ENCODE measurements at regions of chr11 and their contacts with region 1.

Region 1: DNA sequence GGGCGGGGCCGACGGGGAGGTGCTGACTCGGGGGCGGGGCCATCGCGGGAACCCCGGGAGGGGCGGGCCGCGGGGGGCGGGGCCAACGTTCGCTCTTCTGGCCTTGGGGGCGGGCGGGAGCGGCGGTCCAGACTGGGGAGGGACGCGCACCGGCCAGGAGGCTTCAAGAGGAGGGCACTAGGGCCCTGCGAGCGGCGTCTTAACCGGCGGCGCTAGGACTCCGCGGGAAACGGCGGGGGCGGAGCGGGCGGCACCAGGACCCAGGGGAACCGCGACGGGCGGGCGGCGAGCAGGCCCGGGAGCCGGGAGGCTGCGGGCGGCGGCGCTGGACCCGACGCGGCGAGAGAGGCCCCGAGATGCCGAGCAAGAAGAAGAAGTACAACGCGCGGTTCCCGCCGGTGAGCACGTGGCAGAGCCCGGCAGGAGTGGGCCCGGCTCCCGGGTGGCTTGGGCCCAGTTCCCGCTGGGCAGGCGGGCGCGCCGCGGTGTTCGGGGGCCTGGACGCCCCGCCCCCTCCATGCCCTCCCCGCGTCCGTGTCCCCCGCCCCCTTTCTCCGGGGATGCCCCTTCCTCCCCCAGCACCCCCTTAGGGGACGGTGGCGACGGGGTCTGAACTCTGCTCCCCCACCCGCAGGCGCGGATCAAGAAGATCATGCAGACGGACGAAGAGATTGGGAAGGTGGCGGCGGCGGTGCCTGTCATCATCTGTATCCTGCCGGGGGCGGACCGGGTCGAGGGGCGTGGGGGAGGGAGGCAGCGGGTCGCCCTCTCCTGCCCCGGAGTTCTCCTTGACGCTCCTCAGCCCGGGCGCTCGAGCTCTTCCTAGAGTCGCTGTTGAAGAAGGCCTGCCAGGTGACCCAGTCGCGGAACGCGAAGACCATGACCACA is at the start of gene DRAP1:
- DNase-seq: peak; percentile 99
- H3K4me3 Mint-ChIP-seq: peak within 1 kb of the TSS; percentile 93
- H3K27ac Mint-ChIP-seq: peak within 1 kb of the TSS; percentile 84
- H3K4me1 Mint-ChIP-seq: peaks cover 41% of the 10 kb centered on the region
- H3K27me3 Mint-ChIP-seq: no peaks in the 10 kb centered on the region
- total RNA-seq, gene DRAP1: 117 to 134 TPM

Region 2: DNA sequence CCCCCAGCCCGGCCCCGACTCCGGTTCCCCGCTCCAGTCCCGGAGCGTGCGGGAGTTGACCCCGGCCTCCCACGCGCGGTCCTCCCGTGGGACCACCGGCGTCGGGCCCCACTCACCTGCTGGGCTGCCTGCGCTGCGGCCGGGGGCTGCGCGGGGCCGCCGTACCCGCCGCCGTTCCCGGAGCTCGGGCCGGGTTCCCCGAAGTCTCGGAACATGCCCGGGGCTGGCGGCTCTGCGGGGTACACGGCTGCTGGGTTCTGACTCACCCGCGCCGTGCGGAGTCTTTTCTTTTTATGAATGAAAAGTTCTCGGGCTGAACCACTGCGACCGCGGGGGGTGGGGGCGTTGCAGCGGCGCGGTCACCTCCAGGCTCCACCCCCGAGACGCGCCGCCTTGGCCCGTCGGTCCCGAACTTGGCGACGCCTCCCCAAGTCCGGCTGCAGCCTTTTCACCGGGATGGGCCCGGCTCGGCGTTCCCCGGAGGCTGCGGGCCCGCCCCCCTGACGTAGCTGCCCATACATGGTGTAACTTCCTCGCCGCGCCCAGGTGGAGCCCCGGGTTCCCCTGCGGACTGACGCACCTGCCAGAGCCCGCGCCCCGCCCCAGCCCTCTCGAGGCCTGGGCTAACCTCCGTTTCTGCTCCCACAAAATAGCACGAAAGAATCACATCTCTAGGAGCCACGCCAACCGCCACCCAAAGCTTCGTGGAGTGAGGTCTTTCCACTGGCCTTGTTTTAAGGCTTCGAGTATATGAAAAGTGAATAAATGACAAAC is 19.1 kb before region 1 on chr11 and contains the start of gene FOSL1:
- CTCF ChIA-PET with region 1: no interaction called
- intact Hi-C with region 1: loop called (anchors 1 kb)
- DNase-seq: peak; percentile 96
- H3K4me3 Mint-ChIP-seq: peak within 1 kb of the TSS; percentile 83
- H3K27ac Mint-ChIP-seq: peak within 1 kb of the TSS; percentile 79
- H3K4me1 Mint-ChIP-seq: peaks cover 33% of the 10 kb centered on the region
- H3K27me3 Mint-ChIP-seq: peaks cover 2% of the 10 kb centered on the region
- total RNA-seq, gene FOSL1: 8.2 TPM

Region 3: DNA sequence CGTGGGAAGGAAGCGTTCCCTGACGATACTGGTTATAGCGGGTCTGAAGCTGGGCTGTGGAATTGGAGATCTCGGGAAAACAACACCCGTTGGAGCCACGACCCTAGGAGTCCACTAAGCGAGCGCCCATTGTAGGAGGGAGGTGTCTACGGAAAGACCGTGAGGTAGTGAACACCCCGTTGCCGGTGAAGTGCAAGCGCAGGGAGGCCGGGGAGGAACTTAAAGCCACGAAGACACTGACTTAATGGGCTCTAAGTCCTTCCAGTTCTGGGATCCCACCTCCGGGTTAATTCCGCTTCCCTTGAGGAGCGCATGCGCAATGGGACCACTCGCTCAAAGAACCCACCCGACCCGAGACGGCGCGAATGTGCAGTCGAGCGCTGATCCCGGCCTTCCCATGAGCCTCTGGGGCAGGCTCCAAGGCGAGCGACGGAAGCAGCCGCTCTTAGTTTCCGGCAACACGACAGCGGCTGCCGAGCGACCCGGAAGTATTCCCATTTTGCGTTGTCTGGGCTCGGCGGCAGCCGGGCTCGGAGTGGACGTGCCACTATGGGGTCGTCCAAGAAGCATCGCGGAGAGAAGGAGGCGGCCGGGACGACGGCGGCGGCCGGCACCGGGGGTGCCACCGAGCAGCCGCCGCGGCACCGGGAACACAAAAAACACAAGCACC is 42.0 kb after region 1 on chr11 and contains the start of gene SART1:
- CTCF ChIA-PET with region 1: no interaction called
- intact Hi-C with region 1: loop called (anchors 1 kb)
- DNase-seq: peak; percentile 98
- H3K4me3 Mint-ChIP-seq: peak within 1 kb of the TSS; percentile 95
- H3K27ac Mint-ChIP-seq: peak within 1 kb of the TSS; percentile 95
- H3K4me1 Mint-ChIP-seq: peaks cover 48% of the 10 kb centered on the region
- H3K27me3 Mint-ChIP-seq: no peaks in the 10 kb centered on the region
- total RNA-seq, gene SART1: 50.1 to 59.9 TPM

Region 4: DNA sequence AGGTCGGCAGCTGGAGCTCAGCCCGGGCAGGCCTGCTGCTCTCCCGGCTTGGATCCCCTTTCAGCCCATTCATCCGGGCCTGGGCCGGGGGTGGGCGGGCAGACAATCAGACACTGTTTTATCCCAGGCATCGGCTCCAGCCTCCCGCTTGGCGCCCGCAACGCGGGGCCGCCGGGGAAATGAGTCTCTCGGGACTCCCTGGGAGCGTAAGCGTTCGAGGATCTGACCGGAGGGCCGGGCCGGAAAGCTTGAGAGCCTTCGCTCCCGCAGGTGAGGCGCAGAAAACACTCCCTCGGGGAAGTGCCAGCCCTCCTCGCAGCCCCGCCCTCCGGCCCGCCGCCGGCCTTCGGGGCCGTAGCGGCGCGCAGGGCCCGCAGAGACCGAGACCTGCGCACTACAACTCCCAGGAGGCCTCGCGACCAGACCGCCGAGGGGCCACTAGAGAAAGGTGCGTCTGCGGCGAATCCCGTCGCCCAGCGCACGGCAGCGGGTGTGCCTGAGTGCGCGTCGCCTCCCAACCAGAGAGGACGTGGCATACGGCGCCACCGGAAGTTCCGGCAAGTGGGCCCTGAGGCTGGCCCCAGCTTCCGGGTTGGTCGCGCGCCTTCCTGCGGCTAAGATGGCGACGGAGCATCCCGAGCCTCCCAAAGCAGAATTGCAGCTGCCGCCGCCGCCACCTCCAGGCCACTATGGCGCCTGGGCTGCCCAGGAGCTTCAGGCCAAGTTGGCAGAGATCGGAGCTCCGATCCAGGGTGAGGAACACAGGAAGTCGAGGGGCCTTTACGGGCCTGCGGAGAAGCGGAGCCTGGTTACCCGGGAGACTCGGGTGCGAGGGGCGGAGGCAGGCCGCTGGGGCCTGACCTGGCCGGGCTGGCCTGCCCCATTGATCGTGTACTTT is 132.6 kb after region 1 on chr11 and contains the start of gene SF3B2:
- CTCF ChIA-PET with region 1: no interaction called
- intact Hi-C with region 1: loop called (anchors 1 kb)
- DNase-seq: peak; percentile 98
- H3K4me3 Mint-ChIP-seq: peak within 1 kb of the TSS; percentile 99
- H3K27ac Mint-ChIP-seq: peak within 1 kb of the TSS; percentile 96
- H3K4me1 Mint-ChIP-seq: peaks cover 41% of the 10 kb centered on the region
- H3K27me3 Mint-ChIP-seq: peaks cover 7% of the 10 kb centered on the region
- total RNA-seq, gene SF3B2: 319 to 321 TPM

Region 5: DNA sequence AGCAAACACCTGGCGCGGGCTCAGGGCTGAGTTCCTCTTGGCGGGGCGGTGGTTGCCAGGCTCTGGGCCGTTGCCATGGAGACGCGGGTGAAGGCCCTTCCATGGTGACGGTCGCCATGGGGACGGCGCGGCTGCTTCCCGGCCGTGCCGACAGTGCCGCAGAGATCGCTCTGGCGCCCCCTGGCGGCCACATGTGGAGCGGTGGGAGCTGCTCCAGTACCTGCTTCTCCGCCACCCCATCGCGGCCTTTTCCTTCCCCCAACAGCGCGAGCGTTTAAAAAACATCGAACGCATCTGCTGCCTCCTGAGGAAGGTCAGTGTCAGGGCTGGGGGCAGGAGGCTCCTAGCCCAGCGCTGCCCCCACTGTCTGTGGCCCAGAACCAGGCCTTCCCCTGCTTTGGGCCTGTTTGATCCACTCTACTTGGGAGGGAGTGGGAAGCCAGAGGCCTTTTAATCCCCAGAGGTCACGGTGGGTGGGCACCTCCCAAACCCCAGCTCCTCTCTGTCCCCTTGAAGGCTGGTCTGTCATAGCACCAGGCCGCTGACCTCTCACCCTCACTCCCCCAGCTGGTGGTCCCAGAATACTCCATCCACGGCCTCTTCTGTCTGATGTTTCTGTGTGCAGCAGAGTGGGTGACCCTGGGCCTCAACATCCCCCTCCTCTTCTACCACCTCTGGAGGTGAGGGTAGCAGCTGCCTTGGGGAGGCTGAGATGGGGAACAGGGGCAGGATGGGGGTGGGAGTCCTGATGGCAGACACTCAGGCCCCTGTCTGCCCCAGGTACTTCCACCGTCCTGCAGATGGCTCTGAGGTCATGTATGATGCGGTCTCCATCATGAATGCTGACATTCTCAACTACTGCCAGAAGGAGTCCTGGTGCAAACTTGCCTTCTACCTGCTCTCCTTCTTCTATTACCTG is 363.3 kb after region 1 on chr11:
- CTCF ChIA-PET with region 1: no interaction called
- intact Hi-C with region 1: no loop called
- DNase-seq: peak; percentile 99
- H3K4me3 Mint-ChIP-seq: no peak overlapping the region
- H3K27ac Mint-ChIP-seq: peak overlapping the region; percentile 59
- H3K4me1 Mint-ChIP-seq: peaks cover 28% of the 10 kb centered on the region
- H3K27me3 Mint-ChIP-seq: no peaks in the 10 kb centered on the region